Mammary epithelial cell (primary cell): ENCODE measurements at regions of chr16 and their contacts with region 1.

Region 1: GRCh38 chr16:70410734-70411133 is 28.2 kb downstream of the ST3GAL2 start:
- DNase-seq: no peak
- H3K4me3 ChIP-seq: no peak overlapping the region
- H3K27ac ChIP-seq: no peak overlapping the region
- H3K4me1 ChIP-seq: no peaks in the 10 kb centered on the region
- H3K27me3 ChIP-seq: no peaks in the 10 kb centered on the region
- CTCF ChIP-seq: no peak

Region 2: DNA sequence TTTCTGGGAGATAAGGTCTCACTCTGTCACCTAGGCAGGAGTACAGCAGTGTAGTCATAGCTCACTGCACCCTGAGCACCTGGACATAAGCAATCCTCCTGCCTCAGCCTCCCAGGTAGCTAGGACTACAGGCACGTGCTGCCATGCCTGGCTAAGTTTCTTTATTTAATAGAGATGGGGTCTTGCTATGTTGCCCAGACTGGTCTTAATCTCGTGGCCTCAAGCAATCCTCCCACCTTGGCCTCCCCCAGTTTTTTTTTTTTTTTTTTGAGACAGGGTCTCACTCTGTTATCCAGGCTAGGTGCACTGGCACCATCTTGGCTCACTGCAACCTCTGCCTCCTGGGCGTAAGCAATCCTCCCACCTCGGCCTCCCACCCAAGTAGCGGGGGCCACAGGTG is 90.6 kb before region 1 on chr16:
- CTCF ChIA-PET with region 1: no interaction called
- dilution Hi-C with region 1: loop called (anchors 5 kb)
- in situ Hi-C with region 1: no loop called
- intact Hi-C with region 1: no loop called
- DNase-seq: no peak
- H3K4me3 ChIP-seq: no peak overlapping the region
- H3K27ac ChIP-seq: no peak overlapping the region
- H3K4me1 ChIP-seq: no peaks in the 10 kb centered on the region
- H3K27me3 ChIP-seq: no peaks in the 10 kb centered on the region
- CTCF ChIP-seq: no peak

Region 3: GRCh38 chr16:70342016-70342415 is 68.7 kb before region 1 on chr16:
- CTCF ChIA-PET with region 1: no interaction called
- dilution Hi-C with region 1: no loop called
- in situ Hi-C with region 1: no loop called
- intact Hi-C with region 1: no loop called
- DNase-seq: no peak
- H3K4me3 ChIP-seq: no peak overlapping the region
- H3K27ac ChIP-seq: no peak overlapping the region
- H3K4me1 ChIP-seq: peaks cover 5% of the 10 kb centered on the region
- H3K27me3 ChIP-seq: no peaks in the 10 kb centered on the region
- CTCF ChIP-seq: no peak

Region 4: DNA sequence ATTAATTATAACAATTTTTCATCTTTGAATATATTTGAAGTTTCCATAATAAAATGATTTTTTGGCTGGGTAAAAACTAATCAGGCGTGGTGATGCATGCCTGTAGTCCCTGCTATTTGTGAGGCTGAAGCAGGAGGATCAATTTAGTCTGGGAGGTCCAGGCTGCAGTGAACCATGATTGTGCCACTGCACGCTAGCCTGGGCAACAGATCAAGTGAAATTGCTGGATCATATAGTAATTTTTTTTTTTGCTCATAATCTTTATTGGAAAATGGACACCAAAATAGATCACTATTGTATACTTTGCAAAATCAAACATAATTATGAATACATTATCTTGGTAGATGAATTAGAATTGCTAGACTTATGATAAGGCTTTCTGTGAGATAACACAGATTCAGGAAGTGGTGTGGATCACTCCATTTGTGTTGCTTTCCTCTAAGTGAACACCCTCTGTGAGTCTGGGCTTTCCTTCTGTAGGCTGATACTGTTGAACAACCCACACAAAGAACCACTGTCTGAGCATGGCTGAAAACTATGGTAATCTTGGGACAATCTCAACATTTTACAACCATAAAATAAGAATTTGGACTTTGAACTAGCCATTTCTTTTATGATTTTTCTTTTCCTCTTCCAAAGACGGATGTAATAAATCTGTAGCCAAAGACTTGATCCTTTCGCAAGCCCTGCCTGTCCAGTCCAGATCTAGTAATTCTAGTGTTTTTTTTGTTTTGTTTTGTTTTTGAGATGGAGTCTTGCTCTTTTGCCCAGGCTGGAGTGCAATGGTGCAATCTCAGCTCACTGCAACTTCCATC is 33.7 kb after region 1 on chr16:
- CTCF ChIA-PET with region 1: no interaction called
- dilution Hi-C with region 1: loop called (anchors 5 kb)
- in situ Hi-C with region 1: no loop called
- intact Hi-C with region 1: no loop called
- DNase-seq: no peak
- H3K4me3 ChIP-seq: no peak overlapping the region
- H3K27ac ChIP-seq: no peak overlapping the region
- H3K4me1 ChIP-seq: peaks cover 5% of the 10 kb centered on the region
- H3K27me3 ChIP-seq: peaks cover 2% of the 10 kb centered on the region
- CTCF ChIP-seq: no peak

Region 5: GRCh38 chr16:70495425-70496182 is 84.9 kb after region 1 on chr16:
- CTCF ChIA-PET with region 1: no interaction called
- dilution Hi-C with region 1: loop called (anchors 5 kb)
- in situ Hi-C with region 1: no loop called
- intact Hi-C with region 1: no loop called
- DNase-seq: no peak
- H3K4me3 ChIP-seq: no peak overlapping the region
- H3K27ac ChIP-seq: no peak overlapping the region
- H3K4me1 ChIP-seq: no peaks in the 10 kb centered on the region
- H3K27me3 ChIP-seq: no peaks in the 10 kb centered on the region
- CTCF ChIP-seq: no peak